Panc1 (cell line): ENCODE measurements at regions of chr1 and their contacts with region 1.

Region 1: DNA sequence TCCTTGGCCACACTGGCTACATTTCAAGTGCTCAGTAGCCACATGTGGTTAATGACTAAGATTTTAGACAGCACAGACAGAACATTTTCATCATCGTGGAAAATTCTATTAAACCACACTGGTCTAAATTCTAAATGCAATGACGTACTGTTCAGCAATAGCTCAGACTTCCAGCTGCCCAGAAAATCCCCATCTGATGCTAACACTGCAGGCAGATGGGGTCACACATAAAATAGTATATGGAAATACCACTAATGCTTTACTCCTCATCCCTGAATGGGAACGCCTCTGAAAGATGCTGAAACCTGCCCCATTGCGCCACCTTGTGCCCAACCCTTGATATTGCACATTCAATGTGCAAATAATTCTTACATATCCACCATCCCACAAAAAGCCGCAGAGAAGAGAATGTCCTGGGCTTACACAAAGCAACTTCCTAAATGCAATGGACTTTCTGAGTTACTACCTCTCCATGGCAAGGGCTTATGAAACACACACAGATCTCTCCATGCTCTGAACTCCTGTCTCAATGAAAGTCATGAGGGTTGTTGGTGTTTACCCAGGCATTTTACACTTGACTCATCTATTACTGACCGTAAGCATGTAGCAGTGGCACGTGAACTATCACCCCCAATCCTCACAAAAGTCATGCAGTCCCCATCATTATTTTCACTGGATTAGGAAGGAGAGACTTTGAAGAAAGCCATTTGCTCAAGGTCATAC is 20.3 kb upstream of the SLC5A9 start:
- DNase-seq: peak; percentile 45
- ATAC-seq: peak; percentile 74
- H3K4me3 ChIP-seq: no peak overlapping the region
- H3K27ac ChIP-seq: no peak overlapping the region
- H3K4me1 ChIP-seq: no peaks in the 10 kb centered on the region
- H3K27me3 ChIP-seq: 0 out of 2 replicates have a peak, but pooled peaks cover 2% of the 10 kb centered on the region
- CTCF ChIP-seq: peak; percentile 89

Region 2: GRCh38 chr1:47963093-47963492 is 239.1 kb before region 1 on chr1:
- CTCF ChIA-PET with region 1: no interaction called
- POLR2A ChIA-PET with region 1: no interaction called
- in situ Hi-C with region 1: no loop called
- intact Hi-C with region 1: no loop called
- DNase-seq: no peak
- ATAC-seq: no peak
- H3K4me3 ChIP-seq: no peak overlapping the region
- H3K27ac ChIP-seq: no peak overlapping the region
- H3K4me1 ChIP-seq: no peaks in the 10 kb centered on the region
- H3K27me3 ChIP-seq: no peaks in the 10 kb centered on the region
- CTCF ChIP-seq: no peak

Region 3: DNA sequence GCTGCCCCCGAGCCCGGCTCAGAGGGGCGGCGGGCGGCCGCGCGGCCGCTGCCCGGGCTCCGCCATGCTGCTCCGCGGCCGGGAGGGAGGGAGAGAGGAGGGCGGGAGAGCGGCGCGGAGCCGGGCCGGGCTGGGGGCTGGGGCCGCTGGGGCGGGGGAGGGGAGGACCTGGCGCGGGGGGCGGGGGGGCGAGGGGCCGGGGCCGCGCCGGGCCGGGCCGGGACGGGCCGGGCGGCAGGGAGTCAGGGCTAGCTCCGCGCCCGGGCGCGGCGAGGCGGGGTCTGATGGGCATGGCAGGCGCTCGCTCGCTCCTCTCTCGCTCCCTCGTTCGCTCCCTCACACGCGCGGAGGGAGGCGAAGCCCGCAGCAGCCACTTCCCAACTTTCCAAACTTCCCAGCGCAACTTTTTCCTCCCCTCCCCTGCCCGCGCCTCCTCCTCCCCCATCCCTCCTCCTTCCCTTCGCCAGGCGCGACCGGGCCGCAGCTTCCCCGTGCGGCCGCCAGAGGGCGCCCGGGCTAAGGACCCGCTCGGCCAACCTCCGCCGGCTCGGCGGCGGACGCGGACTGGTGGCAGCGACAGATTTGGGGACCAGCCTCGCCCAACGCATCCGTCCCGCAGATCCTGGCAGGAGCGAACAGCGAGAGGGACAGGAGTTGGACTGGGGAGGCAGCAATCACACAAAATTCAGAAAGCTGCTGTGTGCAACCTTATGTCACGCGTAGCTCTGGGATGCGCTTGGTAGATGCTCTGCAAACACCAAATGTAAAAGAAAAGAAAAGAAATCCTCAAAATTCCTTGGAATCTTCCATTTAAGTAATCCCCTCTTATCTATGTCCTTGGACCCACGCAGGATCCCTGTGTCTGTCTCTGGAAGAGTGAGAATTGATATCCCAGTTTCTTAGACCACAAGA is 204.6 kb before region 1 on chr1 and contains the start of gene TRABD2B:
- CTCF ChIA-PET with region 1: no interaction called
- POLR2A ChIA-PET with region 1: no interaction called
- in situ Hi-C with region 1: no loop called
- intact Hi-C with region 1: loop called (anchors 5 kb)
- DNase-seq: peak; percentile 10
- ATAC-seq: peak; percentile 91
- H3K4me3 ChIP-seq: peak within 1 kb of the TSS; percentile 32 to 51
- H3K27ac ChIP-seq: no peak within 1 kb of the TSS
- H3K4me1 ChIP-seq: no peaks in the 10 kb centered on the region
- H3K27me3 ChIP-seq: peaks cover 17% of the 10 kb centered on the region
- CTCF ChIP-seq: peak; percentile 98
- total RNA-seq, gene TRABD2B: not detected

Region 4: DNA sequence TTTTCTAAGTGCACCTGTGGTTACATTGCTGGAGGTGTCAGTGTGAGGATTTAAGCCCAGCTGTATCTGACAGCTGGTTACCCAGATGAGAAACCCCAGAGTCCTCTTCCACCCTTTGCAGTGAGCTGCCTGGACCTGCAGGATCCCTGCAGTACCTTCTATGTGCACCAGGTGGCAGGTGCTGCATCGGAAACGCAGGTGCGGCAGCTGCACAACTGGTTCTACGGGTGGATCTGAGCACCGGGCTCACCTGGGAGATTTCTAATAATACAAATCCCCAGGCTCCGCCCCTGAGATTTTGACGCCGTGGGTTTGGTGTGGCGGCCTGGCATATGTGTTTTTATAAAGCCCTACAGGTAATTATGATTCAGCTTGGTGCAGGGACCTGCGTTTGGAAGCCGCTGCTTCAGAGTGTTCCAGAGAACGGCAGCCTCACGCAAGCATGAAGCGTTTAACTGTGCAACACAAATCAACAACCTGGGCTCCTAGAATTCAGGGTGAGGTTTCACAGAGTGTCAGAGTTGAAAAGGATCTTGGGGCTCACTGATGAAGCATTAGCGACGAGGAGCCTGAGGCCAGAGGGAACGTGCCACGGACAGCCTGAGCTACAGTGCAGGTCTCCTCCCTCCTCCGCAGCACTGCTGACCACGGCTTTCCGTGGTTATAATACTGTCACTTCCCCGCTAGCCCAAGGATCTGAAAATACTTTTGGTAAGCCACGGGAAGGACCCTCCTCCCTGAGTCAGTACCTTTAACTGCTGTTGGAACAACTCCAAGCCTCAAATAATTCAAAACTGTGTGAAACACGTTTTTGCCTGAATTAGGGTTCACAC is 108.3 kb before region 1 on chr1:
- CTCF ChIA-PET with region 1: interaction called, 5 read pairs
- POLR2A ChIA-PET with region 1: no interaction called
- in situ Hi-C with region 1: no loop called
- intact Hi-C with region 1: loop called (anchors 5 kb)
- DNase-seq: peak; percentile 38
- ATAC-seq: peak; percentile 99
- H3K4me3 ChIP-seq: peak overlapping the region; percentile 12 to 33; a peak in 3 of 4 replicates
- H3K27ac ChIP-seq: no peak overlapping the region
- H3K4me1 ChIP-seq: no peaks in the 10 kb centered on the region
- H3K27me3 ChIP-seq: peaks cover 13% of the 10 kb centered on the region
- CTCF ChIP-seq: peak; percentile 88

Region 5: GRCh38 chr1:48109390-48110013 is 92.7 kb before region 1 on chr1:
- CTCF ChIA-PET with region 1: interaction called, 4 read pairs
- POLR2A ChIA-PET with region 1: no interaction called
- in situ Hi-C with region 1: no loop called
- intact Hi-C with region 1: loop called (anchors 1 kb)
- DNase-seq: peak; percentile 51
- ATAC-seq: peak; percentile 89
- H3K4me3 ChIP-seq: no peak overlapping the region
- H3K27ac ChIP-seq: no peak overlapping the region
- H3K4me1 ChIP-seq: no peaks in the 10 kb centered on the region
- H3K27me3 ChIP-seq: no peaks in the 10 kb centered on the region; the same call in none of the 2 replicates
- CTCF ChIP-seq: peak; percentile 85